ENCODE measurements at regions of chr4 and their contacts with region 1.

Region 1: DNA sequence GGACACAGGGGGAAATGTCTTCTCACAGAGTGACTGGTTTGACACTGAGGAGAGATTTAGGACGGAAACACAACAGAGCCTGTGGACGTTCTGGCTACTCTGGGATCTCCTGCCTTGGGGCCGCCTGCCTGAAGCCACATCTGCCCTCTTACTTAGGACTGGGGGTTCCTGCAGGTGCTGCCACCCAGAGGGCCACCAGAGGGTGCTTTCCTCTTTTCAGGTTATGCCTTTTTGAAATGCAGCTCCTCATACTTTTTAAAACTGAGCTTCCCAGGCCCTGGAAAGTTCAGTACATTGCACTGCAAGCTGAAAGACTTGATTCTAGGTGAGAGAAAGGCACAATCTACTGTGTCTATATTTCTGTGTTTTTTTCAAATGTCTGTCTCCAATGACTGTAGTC is 92.2 kb upstream of the PGRMC2 start:
- DNase-seq: no peak
- H3K4me3 ChIP-seq: no peak overlapping the region
- H3K27ac ChIP-seq: no peak overlapping the region
- H3K4me1 ChIP-seq: peaks cover 9% of the 10 kb centered on the region
- H3K27me3 ChIP-seq: no peaks in the 10 kb centered on the region
- CTCF ChIP-seq: peak; percentile 66 to 69

Region 2: DNA sequence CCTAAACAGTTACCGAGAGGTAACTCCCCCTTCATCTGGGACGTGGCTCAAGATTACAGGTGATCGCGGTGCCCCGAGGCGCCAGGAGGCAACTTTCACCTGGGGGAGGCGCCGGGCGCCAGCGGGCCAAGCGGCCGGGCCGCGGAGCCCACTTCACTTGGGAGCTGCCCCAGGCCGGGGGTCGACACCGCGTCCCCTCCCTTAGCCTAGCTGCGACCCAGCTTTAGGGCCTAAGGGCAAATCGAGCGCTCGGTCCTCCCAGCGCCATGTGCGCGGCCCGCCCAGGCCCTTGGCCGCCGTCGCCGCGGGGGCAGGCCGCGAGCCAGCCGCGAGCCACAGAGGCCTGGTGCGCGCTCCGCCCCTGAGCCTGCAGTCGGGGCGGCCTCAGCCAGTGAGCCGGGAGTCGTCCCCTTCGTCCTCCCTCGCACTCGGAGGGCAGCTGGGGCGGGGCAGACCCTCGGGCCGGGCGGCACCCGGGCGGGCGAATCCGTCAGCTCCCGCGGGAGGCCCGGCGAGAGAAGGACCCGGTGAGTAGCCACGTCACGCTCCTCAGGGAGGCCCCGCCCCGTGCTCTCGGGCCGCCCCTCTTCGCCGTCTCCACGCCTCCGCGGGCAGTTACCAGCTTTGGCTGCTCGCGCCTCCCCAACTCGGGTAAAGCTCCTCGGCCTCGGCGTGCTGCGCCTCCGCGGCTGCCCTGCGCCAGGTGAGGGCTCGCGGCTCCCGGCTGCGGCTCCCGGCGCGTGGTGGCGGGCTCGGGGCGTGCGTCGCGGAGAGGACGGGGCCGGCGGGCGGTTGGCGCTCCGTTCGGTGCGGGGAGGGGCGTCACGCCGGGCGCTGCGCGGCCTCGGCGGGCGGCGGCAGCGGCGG is 318.9 kb before region 1 on chr4 and contains the start of gene LARP1B:
- CTCF ChIA-PET with region 1: interaction called, 11 read pairs
- dilution Hi-C with region 1: no loop called
- in situ Hi-C with region 1: no loop called
- intact Hi-C with region 1: no loop called
- DNase-seq: peak; percentile 98
- H3K4me3 ChIP-seq: peak within 1 kb of the TSS; percentile 81 to 97 (median 97)
- H3K27ac ChIP-seq: peak within 1 kb of the TSS; percentile 90
- H3K4me1 ChIP-seq: no peaks in the 10 kb centered on the region
- H3K27me3 ChIP-seq: no peaks in the 10 kb centered on the region
- CTCF ChIP-seq: no peak
- total RNA-seq, gene LARP1B: 15.3 to 27.0 TPM